K562 (cell line): ENCODE measurements at regions of chr17 and their contacts with region 1.

Region 1: GRCh38 chr17:75589012-75589918 is 1.7 kb downstream of the MYO15B start:
- DNase-seq: peak; percentile 94 to 99 (median 99)
- ATAC-seq: peak; percentile 95
- H3K4me3 ChIP-seq: peak overlapping the region; percentile 53
- H3K27ac ChIP-seq: peak overlapping the region; percentile 69
- H3K4me1 ChIP-seq: peaks cover 6 to 36% of the 10 kb centered on the region in 2 experiments; a peak in 3 of 5 replicates
- H3K27me3 ChIP-seq: peaks cover 0 to 4% of the 10 kb centered on the region in 2 experiments; a peak in 1 of 5 replicates
- CTCF ChIP-seq: peak; percentile 27 to 87 (median 62); a peak in 4 of 6 replicates
- EP300 ChIP-seq: no peak
- POLR2A ChIP-seq: no peak
- RAD21 ChIP-seq: peak in 1 of 2 experiments; percentile 31; a peak in 2 of 4 replicates

Region 2: DNA sequence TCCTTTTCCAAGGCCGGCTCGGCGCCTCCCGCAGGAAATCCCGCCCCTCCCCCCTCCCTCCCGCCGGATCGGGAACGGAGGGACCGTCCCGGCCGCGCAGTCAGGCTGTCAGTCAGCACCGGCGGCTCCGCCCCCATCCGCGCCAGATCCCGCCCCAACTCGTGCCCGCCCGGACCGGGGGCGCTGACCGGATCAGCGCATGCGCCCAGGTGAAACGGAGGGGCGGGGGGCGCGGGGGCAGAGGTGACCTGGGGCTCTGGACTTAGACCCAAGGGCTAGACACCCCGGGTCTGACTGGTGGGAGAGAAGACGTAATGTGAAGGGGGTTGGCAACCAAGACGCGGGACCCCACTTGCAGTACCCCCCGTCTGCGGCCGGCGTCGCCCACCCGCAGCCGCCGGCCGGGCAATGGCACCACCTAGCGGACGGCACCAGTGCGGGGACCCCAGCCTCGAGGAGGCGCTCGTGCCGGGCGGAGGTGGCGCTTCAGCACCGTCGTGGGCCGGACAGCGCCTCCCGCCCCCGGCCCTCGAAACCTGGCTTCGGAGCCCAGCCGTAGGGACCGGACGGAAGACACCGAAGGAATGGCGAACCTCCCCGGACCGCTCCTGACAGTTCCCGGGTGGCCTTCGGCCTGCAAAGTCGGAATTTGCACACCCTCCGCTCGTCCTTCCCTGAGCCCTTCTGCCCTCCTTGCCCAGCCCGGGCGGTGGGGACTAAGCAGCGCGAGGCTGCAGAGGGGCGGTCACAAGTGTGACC is 73.6 kb before region 1 on chr17 and contains the start of gene CASKIN2:
- CTCF ChIA-PET with region 1: no interaction called
- POLR2A ChIA-PET with region 1: interaction called, 3 read pairs
- in situ Hi-C with region 1: no loop called
- intact Hi-C with region 1: loop called (anchors 5 kb)
- DNase-seq: peak; percentile 92 to 99 (median 96)
- ATAC-seq: peak; percentile 82
- H3K4me3 ChIP-seq: peak within 1 kb of the TSS; percentile 91
- H3K27ac ChIP-seq: peak within 1 kb of the TSS; percentile 14; the same call in 2 of the 3 replicates
- H3K4me1 ChIP-seq: peaks cover 34 to 64% of the 10 kb centered on the region in 2 experiments
- H3K27me3 ChIP-seq: no peaks in the 10 kb centered on the region
- CTCF ChIP-seq: peak; percentile 97 to 100 (median 100)
- EP300 ChIP-seq: no peak
- POLR2A ChIP-seq: no peak
- RAD21 ChIP-seq: peak; percentile 86 to 90
- polyA plus RNA-seq, gene CASKIN2: 0.01 to 0.04 TPM